ENCODE measurements at regions of chr15 and their contacts with region 1.

Region 1: GRCh38 chr15:98727115-98728085 is 79.1 kb downstream of the IGF1R start:
- DNase-seq: peak; percentile 95
- ATAC-seq: peak; percentile 98
- H3K4me3 ChIP-seq: peak overlapping the region; percentile 39
- H3K27ac ChIP-seq: peak overlapping the region; percentile 89
- H3K4me1 ChIP-seq: peaks cover 35% of the 10 kb centered on the region
- H3K27me3 ChIP-seq: no peaks in the 10 kb centered on the region
- CTCF ChIP-seq: no peak

Region 2: GRCh38 chr15:98620020-98620419 is 107.4 kb before region 1 on chr15:
- CTCF ChIA-PET with region 1: no interaction called
- POLR2A ChIA-PET with region 1: no interaction called
- intact Hi-C with region 1: no loop called
- DNase-seq: no peak
- ATAC-seq: no peak
- H3K4me3 ChIP-seq: no peak overlapping the region
- H3K27ac ChIP-seq: no peak overlapping the region
- H3K4me1 ChIP-seq: no peaks in the 10 kb centered on the region
- H3K27me3 ChIP-seq: peaks cover 88% of the 10 kb centered on the region
- CTCF ChIP-seq: no peak

Region 3: GRCh38 chr15:98658831-98659699 is 68.3 kb before region 1 on chr15:
- CTCF ChIA-PET with region 1: no interaction called
- POLR2A ChIA-PET with region 1: no interaction called
- intact Hi-C with region 1: loop called (anchors 2 kb)
- DNase-seq: peak; percentile 74
- ATAC-seq: peak; percentile 77
- H3K4me3 ChIP-seq: no peak overlapping the region
- H3K27ac ChIP-seq: no peak overlapping the region
- H3K4me1 ChIP-seq: peaks cover 8% of the 10 kb centered on the region; the same call in 1 of the 2 replicates
- H3K27me3 ChIP-seq: peaks cover 7% of the 10 kb centered on the region; the same call in 1 of the 2 replicates
- CTCF ChIP-seq: peak; percentile 89

Region 4: DNA sequence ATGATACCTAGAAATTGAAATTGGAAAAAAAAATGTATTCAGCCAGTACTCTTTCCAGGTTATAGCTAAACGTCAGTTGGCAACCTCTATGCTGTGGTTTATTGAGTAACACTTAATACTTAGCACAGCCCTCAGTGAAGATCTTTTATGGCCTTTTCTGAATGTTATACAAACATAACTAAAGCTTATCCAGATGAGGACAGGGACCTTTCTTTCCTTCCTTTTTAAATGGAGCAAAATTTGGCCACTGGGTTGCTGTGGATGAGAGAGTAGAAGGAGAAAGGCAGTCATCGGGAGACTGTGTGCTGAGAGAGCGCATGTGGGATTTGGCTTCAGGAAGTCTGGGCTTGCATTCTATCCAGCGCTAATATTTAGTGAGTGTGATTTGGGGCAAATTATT is 43.0 kb before region 1 on chr15:
- CTCF ChIA-PET with region 1: no interaction called
- POLR2A ChIA-PET with region 1: no interaction called
- intact Hi-C with region 1: loop called (anchors 2 kb)
- DNase-seq: peak; percentile 63
- ATAC-seq: peak; percentile 75
- H3K4me3 ChIP-seq: no peak overlapping the region
- H3K27ac ChIP-seq: no peak overlapping the region
- H3K4me1 ChIP-seq: peaks cover 11% of the 10 kb centered on the region
- H3K27me3 ChIP-seq: no peaks in the 10 kb centered on the region
- CTCF ChIP-seq: no peak

Region 5: DNA sequence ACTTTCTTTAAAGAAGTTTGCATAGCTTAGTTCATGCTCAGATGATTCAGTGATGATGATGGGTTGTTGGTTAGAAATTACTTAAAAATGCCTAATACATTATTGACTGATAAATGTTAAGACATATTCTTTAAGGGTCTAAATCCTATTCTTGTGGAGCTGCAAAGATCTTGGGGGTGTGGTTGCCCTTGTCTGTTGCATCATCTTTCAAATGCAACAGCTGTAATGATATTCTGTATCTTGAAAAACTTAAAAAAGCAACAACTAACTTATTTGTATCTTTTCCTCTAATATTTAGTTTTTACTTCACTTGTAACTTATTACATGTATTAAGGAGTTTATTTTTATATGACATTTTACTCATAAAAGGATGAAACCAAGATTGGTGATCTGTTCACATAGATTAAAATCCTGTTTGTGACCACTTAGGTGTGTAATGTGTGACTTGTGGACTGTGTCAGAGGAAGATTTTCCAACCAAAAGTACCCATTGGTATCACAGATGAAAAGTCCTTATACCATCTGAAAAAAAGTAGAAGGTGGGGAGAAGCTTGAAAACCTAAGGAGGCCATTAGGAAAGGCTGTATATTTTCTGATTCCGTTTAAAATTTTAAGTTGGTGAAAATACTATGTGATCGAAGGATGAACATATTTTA is 63.8 kb after region 1 on chr15:
- CTCF ChIA-PET with region 1: no interaction called
- POLR2A ChIA-PET with region 1: no interaction called
- intact Hi-C with region 1: no loop called
- DNase-seq: no peak
- ATAC-seq: no peak
- H3K4me3 ChIP-seq: no peak overlapping the region
- H3K27ac ChIP-seq: no peak overlapping the region
- H3K4me1 ChIP-seq: peaks cover 10% of the 10 kb centered on the region; the same call in 1 of the 2 replicates
- H3K27me3 ChIP-seq: no peaks in the 10 kb centered on the region
- CTCF ChIP-seq: no peak

Region 6: DNA sequence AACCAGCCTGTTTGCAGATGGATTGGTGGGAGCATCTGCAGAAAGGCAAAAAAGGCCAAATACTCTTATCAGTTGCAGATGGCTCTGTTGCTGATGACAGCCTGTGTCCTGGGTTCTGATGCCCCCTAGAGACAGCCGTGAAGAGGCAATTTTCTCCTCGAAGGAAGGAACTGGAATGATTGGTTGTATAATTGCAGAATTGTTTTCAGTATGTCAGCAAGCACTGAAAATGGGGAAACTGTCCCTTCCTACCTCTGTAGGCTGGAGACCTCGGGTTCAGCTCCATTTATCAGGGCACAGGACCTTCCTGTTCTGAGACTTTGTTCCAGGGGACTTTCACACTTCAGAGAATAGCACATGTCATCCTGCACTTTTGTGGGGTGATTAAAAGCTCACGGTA is 177.1 kb after region 1 on chr15:
- CTCF ChIA-PET with region 1: no interaction called
- POLR2A ChIA-PET with region 1: no interaction called
- intact Hi-C with region 1: loop called (anchors 1 kb)
- DNase-seq: peak; percentile 60
- ATAC-seq: peak; percentile 50
- H3K4me3 ChIP-seq: no peak overlapping the region
- H3K27ac ChIP-seq: peak overlapping the region; percentile 81; the same call in 1 of the 2 replicates
- H3K4me1 ChIP-seq: peaks cover 53% of the 10 kb centered on the region
- H3K27me3 ChIP-seq: no peaks in the 10 kb centered on the region
- CTCF ChIP-seq: peak; percentile 84